ENCODE measurements at regions of chr11 and their contacts with region 1.

Region 1: GRCh38 chr11:121194731-121195596 is 93.9 kb downstream of the TECTA start:
- DNase-seq: peak in 8 of 9 experiments; percentile 30 to 76 (median 60)
- ATAC-seq: no peak
- H3K4me3 ChIP-seq: no peak overlapping the region
- H3K4me3 Mint-ChIP-seq: no peak overlapping the region
- H3K27ac ChIP-seq: no peak overlapping the region
- H3K27ac Mint-ChIP-seq: no peak overlapping the region
- H3K4me1 ChIP-seq: no peaks in the 10 kb centered on the region
- H3K4me1 Mint-ChIP-seq: peaks cover 6% of the 10 kb centered on the region
- H3K27me3 ChIP-seq: no peaks in the 10 kb centered on the region
- H3K27me3 Mint-ChIP-seq: peaks cover 33% of the 10 kb centered on the region
- CTCF ChIP-seq: peak; percentile 90

Region 2: DNA sequence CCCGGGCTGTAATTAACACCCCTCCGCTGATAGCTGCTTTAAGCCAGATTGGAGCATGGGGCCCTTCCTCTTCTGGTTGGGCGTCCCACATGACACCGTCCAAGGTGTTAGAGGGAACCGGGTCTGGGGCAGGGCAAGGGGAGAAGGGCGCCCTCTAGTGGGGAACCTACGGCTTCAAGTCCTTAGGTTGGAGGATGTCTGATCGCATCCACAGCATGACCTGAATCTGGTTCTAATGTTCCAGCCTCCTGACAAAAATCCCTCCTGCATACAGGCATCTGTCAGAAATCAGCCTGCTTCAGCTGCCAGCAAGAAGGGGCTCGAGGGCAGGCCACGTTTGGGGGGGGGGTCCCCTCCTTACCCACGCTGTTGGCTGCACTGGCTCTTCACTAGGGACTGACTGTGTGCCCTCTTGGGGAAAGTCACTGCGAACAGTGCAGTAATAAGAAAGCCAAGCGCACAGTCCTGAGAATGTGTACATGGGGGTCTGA is 265.3 kb before region 1 on chr11:
- CTCF ChIA-PET with region 1: interaction called, 3 read pairs
- POLR2A ChIA-PET with region 1: no interaction called
- intact Hi-C with region 1: loop called in 1 of 2 experiments (anchors 1 kb)
- DNase-seq: peak in 6 of 9 experiments; percentile 9 to 70 (median 46)
- ATAC-seq: no peak
- H3K4me3 ChIP-seq: no peak overlapping the region
- H3K4me3 Mint-ChIP-seq: no peak overlapping the region
- H3K27ac ChIP-seq: no peak overlapping the region
- H3K27ac Mint-ChIP-seq: no peak overlapping the region
- H3K4me1 ChIP-seq: no peaks in the 10 kb centered on the region
- H3K4me1 Mint-ChIP-seq: no peaks in the 10 kb centered on the region
- H3K27me3 ChIP-seq: peaks cover 0 to 4% of the 10 kb centered on the region in 2 experiments
- H3K27me3 Mint-ChIP-seq: peaks cover 11% of the 10 kb centered on the region
- CTCF ChIP-seq: peak; percentile 47

Region 3: DNA sequence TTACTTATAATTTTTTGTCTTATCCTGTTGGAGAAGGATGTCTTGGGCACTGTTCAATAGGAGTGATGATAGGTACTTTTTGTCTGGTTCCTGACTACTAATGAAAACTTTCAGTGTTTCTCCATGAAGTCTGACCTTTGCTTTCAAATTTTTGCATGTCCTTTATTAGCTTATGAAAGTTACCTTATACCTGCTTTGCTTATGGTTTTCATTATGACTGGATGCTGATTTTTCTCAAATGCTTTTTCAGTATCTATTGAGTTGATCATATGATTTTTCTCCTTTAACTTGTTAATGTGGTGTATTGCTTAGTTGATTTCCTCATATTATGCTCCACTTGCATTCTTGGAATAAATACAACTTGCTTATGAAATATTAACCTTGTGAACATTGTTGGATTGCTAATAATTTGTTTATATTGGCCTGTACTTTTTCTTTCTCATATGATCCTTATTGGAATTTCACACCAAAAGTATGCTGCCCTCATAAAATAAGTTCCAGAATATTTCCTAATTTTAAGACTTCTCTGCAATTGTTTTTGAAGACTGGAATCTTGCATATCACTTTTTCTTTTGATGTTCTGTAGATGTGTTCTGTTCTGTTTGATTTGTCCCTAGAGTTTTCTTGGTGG is 12.6 kb after region 1 on chr11:
- CTCF ChIA-PET with region 1: interaction called, 20 read pairs
- POLR2A ChIA-PET with region 1: no interaction called
- intact Hi-C with region 1: no loop called
- DNase-seq: no peak
- ATAC-seq: no peak
- H3K4me3 ChIP-seq: no peak overlapping the region
- H3K4me3 Mint-ChIP-seq: no peak overlapping the region
- H3K27ac ChIP-seq: no peak overlapping the region
- H3K27ac Mint-ChIP-seq: no peak overlapping the region
- H3K4me1 ChIP-seq: no peaks in the 10 kb centered on the region
- H3K4me1 Mint-ChIP-seq: no peaks in the 10 kb centered on the region
- H3K27me3 ChIP-seq: peaks cover 0 to 4% of the 10 kb centered on the region in 2 experiments
- H3K27me3 Mint-ChIP-seq: peaks cover 22% of the 10 kb centered on the region
- CTCF ChIP-seq: no peak

Region 4: DNA sequence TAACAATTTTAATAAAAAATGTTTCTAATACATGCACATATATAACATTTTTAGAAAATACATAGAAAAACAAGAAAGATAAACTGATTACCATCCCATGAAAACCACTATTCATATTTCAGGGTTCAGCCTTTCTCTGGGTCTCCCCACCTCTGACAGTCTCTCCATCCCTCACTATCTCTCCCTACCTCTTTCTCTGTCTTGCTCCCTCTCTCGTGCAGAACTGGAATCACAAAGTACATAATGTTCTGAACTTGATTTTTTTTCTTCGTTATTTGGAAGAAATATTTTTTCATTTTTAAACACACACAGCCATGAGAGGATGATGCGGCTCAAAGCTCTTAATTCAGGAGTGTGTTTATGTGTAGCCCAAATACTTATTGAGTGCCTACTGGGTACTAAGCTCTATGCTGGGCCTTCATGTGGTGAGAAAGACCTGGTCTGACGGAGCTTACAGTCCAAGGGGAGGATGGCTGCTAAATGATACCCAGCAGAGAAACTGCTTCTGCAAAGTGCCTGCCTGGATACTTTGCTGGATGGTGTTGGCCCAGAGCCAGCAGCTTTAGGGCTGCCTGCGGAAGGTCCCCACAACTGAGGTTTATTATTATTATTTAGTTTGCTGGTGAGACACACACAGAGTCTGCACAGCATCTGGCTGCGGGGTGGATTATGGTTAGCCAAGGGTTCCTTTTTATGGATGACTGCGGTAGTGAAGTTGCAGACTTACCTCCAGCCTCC is 140.2 kb after region 1 on chr11:
- CTCF ChIA-PET with region 1: no interaction called
- POLR2A ChIA-PET with region 1: no interaction called
- intact Hi-C with region 1: no loop called
- DNase-seq: no peak
- ATAC-seq: no peak
- H3K4me3 ChIP-seq: no peak overlapping the region
- H3K4me3 Mint-ChIP-seq: no peak overlapping the region
- H3K27ac ChIP-seq: no peak overlapping the region
- H3K27ac Mint-ChIP-seq: no peak overlapping the region
- H3K4me1 ChIP-seq: no peaks in the 10 kb centered on the region
- H3K4me1 Mint-ChIP-seq: peaks cover 13% of the 10 kb centered on the region
- H3K27me3 ChIP-seq: no peaks in the 10 kb centered on the region
- H3K27me3 Mint-ChIP-seq: no peaks in the 10 kb centered on the region
- CTCF ChIP-seq: no peak

Measured in CD8-positive, alpha-beta T cell (primary cell).